SK-MEL-5 (cell line): ENCODE measurements at regions of chr10 and their contacts with region 1.

Region 1: GRCh38 chr10:124388823-124389612 is 29.7 kb downstream of the OAT start:
- DNase-seq: peak; percentile 76

Region 2: GRCh38 chr10:123948030-123948823 is 440.8 kb before region 1 on chr10:
- in situ Hi-C with region 1: no loop called
- DNase-seq: no peak

Region 3: GRCh38 chr10:123994417-123995081 is 394.5 kb before region 1 on chr10:
- in situ Hi-C with region 1: loop called (anchors 25 kb)
- DNase-seq: peak; percentile 68

Region 4: DNA sequence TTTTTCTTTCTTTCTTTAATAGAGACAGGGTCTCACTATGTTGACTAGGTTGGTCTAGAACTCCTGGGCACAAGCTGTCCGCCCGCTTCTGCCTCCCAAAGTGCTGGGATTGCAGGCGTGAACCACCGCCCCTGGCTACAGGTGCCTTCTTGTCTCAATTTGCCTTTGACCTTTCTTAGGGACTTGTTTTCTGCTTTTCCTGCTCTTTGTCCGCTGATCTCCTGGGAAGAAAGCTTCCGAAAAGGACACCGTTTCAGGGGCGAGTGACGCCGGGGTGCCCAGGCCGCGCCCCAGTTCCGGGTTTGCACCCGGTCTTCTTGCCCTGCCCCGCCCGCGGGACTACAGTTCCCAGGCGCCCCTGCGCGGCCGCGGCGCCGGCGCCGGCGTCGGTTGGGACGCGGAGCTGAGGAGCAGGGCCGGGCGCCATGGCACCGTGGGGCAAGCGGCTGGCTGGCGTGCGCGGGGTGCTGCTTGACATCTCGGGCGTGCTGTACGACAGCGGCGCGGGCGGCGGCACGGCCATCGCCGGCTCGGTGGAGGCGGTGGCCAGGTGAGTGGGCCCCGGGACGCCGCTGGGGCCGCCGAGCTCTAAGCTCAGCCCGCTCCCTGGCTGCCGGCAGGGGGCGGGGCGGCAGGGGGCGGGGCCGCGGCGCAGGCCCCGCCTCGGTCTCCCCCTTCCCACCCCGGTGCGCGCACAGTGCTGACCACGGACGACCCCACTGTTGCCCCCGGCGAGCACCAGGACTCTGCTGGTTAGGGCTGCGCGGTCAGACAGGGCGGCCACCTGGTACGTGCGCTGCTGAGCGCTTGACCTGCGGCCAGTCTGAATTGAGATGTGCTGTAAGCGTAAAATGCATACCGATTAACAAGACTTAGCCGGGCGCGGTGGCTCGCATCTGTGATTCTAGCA is 72.7 kb after region 1 on chr10 and contains the start of gene LHPP:
- in situ Hi-C with region 1: no loop called
- DNase-seq: peak; percentile 75
- total RNA-seq, gene LHPP: 4.7 and 5.7 TPM in 2 replicates